Head of caudate nucleus (tissue), 42 donors: ENCODE measurements at regions of chr1 and their contacts with region 1.

Region 1: GRCh38 chr1:225809842-225810578 is at the start of gene EPHX1:
- DNase-seq: peak; percentile 71 to 94 (median 88)

Region 2: GRCh38 chr1:225182716-225183115 is 627.3 kb before region 1 on chr1:
- intact Hi-C with region 1: no loop called
- DNase-seq: no peak

Region 3: GRCh38 chr1:225406976-225407725 is 402.9 kb before region 1 on chr1:
- intact Hi-C with region 1: no loop called
- DNase-seq: no peak

Region 4: GRCh38 chr1:225777583-225778336 is 32.2 kb before region 1 on chr1 and contains the start of gene SRP9:
- intact Hi-C with region 1: loop called (anchors 5 kb)
- DNase-seq: peak; percentile 97 to 99 (median 99)

Region 5: DNA sequence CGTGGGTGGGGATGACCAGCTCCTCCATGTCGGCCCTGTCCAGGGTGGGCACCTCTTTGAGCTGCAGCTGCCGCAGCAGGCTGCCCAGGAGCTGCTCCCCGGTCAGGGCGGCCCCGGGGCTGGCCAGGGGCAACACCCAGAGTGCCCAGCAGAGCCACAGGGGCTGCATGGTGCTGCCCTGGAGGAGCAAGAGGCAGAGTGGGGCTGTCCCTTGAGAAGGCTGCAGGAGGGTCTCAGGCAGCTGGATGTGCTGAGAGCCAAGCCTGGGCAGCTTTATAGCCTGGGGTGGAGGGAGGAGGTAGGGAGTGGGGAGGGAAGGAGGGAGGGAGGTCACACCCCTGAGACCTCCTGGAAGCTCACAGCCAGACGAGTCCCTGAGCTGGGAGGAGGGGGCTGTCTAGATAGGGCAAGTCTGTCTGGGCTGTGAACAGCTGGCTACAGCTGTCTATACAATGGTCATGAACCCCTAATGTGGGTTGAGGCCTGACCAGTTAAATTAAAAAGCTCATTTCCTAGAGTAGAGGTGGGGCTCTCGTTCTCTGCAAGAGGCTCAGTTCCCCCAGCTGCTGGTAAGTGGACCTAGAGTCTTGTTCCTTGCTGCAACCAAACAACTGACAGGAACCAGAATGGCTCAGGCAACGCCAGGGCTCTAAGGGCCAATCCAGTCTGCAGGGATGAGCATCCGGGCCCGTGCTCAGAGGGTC is 79.0 kb after region 1 on chr1 and contains the start of gene LEFTY1:
- intact Hi-C with region 1: no loop called
- DNase-seq: no peak

Region 6: DNA sequence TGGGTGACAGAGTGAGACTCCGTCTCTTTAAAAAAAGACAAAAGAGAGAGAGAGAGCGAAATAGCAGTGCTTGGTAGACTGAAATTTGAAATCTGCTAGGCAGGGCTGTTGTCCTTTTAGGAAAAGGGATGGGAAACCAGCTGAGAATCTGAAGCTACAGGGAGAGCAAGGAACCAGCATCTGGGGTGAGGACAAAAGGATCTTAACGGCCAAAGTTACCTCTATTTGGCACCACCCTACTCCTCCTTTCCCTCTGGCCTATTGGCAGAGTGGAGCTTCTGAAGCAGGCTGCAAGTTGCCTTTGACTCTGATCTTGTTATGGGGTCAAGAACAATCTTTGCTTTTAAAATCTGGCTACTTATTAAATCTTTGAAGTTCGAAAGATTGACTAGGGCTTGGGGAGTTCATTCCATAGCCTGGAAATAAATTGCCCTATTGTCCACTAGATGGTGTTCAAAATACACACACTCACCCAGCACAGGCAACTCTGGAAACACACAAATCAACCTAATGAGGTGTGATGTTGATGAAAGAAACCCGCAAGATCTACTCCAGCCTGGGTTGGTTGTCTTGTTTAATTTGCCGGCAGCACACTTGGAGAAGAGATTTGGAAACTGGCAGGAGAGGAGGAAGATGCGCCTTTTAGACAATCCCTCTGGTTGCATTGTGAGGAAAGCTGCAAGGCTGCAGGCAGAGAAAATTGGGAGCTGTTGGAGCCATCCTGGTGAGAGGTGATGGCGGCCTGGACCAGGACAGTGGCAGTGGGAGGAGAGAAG is 614.4 kb after region 1 on chr1:
- intact Hi-C with region 1: no loop called
- DNase-seq: peak in 3 of 42 donors; percentile 18 to 45 (median 26)